ENCODE measurements at regions of chr14 and their contacts with region 1.

Region 1: GRCh38 chr14:70622111-70622712 is 19.5 kb upstream of the TTC9 start:
- DNase-seq: peak; percentile 71
- H3K4me3 Mint-ChIP-seq: no peak overlapping the region
- H3K27ac Mint-ChIP-seq: no peak overlapping the region
- H3K4me1 Mint-ChIP-seq: no peaks in the 10 kb centered on the region
- H3K27me3 Mint-ChIP-seq: no peaks in the 10 kb centered on the region
- CTCF ChIP-seq: peak; percentile 76

Region 2: DNA sequence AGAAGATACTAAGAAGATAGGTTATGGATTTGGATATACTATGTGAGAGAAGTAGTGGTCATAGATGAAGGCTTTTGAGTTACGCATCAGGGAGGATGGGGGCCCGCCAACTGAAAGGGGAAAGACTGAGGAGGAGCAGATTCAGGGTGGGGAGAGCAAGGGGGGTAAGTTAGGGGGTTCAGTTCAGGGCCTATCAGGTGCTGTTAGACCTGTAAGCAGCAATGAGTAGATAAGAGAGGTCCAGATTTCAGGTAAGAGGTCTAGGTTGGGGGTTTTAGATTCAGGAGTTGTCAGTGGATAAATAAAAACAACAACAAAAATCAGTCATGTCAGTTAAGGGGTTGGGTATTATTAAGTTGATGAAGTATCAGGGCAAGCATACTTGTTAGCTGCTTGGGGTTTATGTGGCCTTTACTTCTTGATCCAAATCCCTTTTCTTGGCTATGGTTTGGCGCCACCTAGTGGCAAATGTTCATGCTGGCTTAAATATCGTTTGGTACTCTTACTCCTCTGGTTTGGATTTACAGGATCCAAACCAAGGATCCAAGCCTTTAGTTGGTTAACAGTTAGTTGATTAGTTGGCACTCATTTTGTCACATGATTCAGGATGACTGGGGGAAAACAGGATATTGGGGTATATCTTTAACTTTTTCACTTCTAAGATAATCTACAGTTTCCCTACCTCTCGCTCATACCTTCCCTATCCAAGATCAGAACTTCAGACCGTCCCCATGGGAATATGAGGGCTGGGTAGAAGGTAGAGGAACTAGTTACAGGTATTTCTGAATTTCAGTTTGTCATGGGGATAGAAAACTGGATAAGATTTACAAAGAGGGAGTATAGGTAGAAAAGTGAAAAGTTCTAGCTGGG is 350.1 kb after region 1 on chr14:
- CTCF ChIA-PET with region 1: interaction called, 4 read pairs
- POLR2A ChIA-PET with region 1: no interaction called
- intact Hi-C with region 1: loop called (anchors 2 kb)
- DNase-seq: peak; percentile 88
- H3K4me3 Mint-ChIP-seq: no peak overlapping the region
- H3K27ac Mint-ChIP-seq: peak overlapping the region; percentile 53
- H3K4me1 Mint-ChIP-seq: peaks cover 8% of the 10 kb centered on the region
- H3K27me3 Mint-ChIP-seq: no peaks in the 10 kb centered on the region
- CTCF ChIP-seq: peak; percentile 81

Measured in MCF 10A (cell line).